ENCODE measurements at regions of chr20 and their contacts with region 1.

Region 1: DNA sequence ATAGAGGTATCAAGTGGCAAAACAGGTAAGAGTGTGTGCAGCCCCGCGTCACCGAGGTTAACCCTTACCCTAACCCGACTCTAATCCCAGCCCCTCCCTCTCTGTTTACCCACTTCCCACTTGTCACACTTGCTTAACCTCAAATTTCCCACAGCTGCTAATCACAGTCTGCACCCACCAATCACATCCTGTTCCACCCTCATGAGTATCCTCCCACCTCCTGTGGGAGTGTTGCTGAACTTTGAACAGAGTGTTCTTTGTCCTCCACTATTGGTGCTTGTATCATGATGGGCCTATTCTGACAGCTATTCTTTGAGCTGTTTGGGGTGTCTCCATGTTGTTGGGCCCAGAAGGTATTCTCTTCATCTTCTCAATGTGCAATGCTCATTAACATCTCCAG is 487.8 kb downstream of the PTPRT start:
- DNase-seq: no peak
- ATAC-seq: peak in 1 of 8 donors; percentile 26
- H3K4me3 ChIP-seq: no peak overlapping the region
- H3K27ac ChIP-seq: no peak overlapping the region
- H3K4me1 ChIP-seq: no peaks in the 10 kb centered on the region
- H3K27me3 ChIP-seq: no peaks in the 10 kb centered on the region
- CTCF ChIP-seq: no peak

Region 2: GRCh38 chr20:42763015-42763414 is 61.1 kb after region 1 on chr20:
- intact Hi-C with region 1: loop called in 1 of 10 experiments (anchors 2 kb)
- DNase-seq: no peak
- ATAC-seq: no peak
- H3K4me3 ChIP-seq: no peak overlapping the region
- H3K27ac ChIP-seq: no peak overlapping the region
- H3K4me1 ChIP-seq: no peaks in the 10 kb centered on the region
- H3K27me3 ChIP-seq: no peaks in the 10 kb centered on the region
- CTCF ChIP-seq: no peak